Right lobe of liver (tissue), 6 donors: ENCODE measurements at regions of chr2 and their contacts with region 1.

Region 1: GRCh38 chr2:100984892-100985379 is 17.2 kb upstream of the RPL31 start:
- DNase-seq: peak; percentile 78 to 83 (median 79)
- ATAC-seq: peak; percentile 74 to 84 (median 78)
- H3K4me3 ChIP-seq: no peak overlapping the region
- H3K27ac ChIP-seq: no peak overlapping the region
- H3K4me1 ChIP-seq: no peaks in the 10 kb centered on the region
- H3K27me3 ChIP-seq: no peaks in the 10 kb centered on the region
- CTCF ChIP-seq: peak; percentile 87 to 93 (median 90)
- POLR2A ChIP-seq: no peak

Region 2: GRCh38 chr2:100610381-100610831 is 374.5 kb before region 1 on chr2:
- intact Hi-C with region 1: loop called (anchors 5 to 10 kb)
- DNase-seq: peak; percentile 62 to 70 (median 68)
- ATAC-seq: peak; percentile 79 to 89 (median 80)
- H3K4me3 ChIP-seq: no peak overlapping the region
- H3K27ac ChIP-seq: no peak overlapping the region
- H3K4me1 ChIP-seq: no peaks in the 10 kb centered on the region
- H3K27me3 ChIP-seq: no peaks in the 10 kb centered on the region
- CTCF ChIP-seq: peak; percentile 48 to 57 (median 56)
- POLR2A ChIP-seq: no peak

Region 3: GRCh38 chr2:100721693-100722092 is 263.2 kb before region 1 on chr2:
- intact Hi-C with region 1: loop called (anchors 5 to 10 kb)
- DNase-seq: no peak
- ATAC-seq: no peak
- H3K4me3 ChIP-seq: no peak overlapping the region
- H3K27ac ChIP-seq: no peak overlapping the region
- H3K4me1 ChIP-seq: no peaks in the 10 kb centered on the region
- H3K27me3 ChIP-seq: no peaks in the 10 kb centered on the region
- CTCF ChIP-seq: no peak
- POLR2A ChIP-seq: no peak

Region 4: DNA sequence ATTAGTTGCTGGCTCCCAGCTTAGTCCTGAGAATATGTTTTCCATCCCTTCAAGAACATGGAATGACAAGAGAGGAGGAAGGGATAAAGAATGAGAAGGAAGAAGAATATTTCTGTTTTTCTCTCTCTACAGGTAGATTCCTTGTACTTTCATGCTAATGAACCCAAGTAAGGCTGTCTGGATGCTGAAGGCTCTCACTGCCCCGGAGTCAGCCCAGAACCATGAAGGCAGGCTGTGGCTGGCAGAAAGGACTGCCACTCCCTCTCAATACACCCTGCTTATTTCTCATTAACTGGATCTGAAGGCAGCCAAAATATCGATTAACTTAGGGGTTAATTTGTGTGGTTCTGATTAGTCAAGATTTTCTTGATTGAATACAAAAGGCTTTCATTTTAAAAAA is 258.1 kb before region 1 on chr2:
- intact Hi-C with region 1: loop called (anchors 5 to 10 kb)
- DNase-seq: no peak
- ATAC-seq: no peak
- H3K4me3 ChIP-seq: no peak overlapping the region
- H3K27ac ChIP-seq: no peak overlapping the region
- H3K4me1 ChIP-seq: no peaks in the 10 kb centered on the region
- H3K27me3 ChIP-seq: no peaks in the 10 kb centered on the region
- CTCF ChIP-seq: no peak
- POLR2A ChIP-seq: no peak